ENCODE measurements at regions of chr20 and their contacts with region 1.

Region 1: DNA sequence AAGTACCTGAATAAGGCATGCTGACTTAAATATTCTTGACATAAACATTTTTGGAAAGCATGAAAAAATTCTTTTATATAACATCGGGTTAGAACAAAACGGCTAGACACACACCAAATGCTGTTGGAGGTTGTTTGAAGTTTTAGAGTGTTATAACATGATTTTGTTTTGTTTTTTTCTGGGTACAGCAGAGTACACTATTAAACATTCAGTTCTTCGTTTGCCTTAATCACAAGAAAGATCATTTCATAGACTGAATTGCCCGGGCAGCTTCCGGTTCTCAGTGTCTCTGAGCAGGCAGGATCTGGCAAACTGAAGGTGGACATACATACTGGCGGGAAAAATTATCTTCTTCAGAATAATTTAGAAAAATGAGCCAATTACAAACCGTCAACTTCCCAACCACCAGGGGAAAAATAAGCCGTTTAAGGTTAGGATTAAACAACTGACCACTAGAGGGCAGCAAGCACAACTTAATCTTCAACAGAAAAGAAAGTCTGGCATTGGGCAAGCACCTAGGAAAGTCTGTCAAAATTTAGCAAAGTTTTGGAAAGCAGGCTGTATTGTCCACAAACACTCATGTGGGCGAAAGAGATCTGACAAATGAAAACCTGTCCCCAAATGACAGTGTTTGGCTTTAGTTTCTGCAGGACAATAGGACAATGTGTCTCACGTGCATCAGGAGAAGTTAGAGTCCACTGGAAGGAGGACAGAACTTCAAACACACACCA is 15.0 kb downstream of the ZNF217 start:
- DNase-seq: peak; percentile 92
- H3K4me3 Mint-ChIP-seq: peak overlapping the region; percentile 82
- H3K27ac Mint-ChIP-seq: peak overlapping the region; percentile 82
- H3K4me1 Mint-ChIP-seq: peaks cover 75% of the 10 kb centered on the region
- H3K27me3 Mint-ChIP-seq: no peaks in the 10 kb centered on the region

Region 2: GRCh38 chr20:53077373-53078205 is 501.1 kb before region 1 on chr20:
- intact Hi-C with region 1: loop called (anchors 10 kb)
- DNase-seq: peak; percentile 68
- H3K4me3 Mint-ChIP-seq: no peak overlapping the region
- H3K27ac Mint-ChIP-seq: no peak overlapping the region
- H3K4me1 Mint-ChIP-seq: peaks cover 37% of the 10 kb centered on the region
- H3K27me3 Mint-ChIP-seq: no peaks in the 10 kb centered on the region

Region 3: GRCh38 chr20:53387983-53388675 is 190.5 kb before region 1 on chr20:
- intact Hi-C with region 1: no loop called
- DNase-seq: peak; percentile 76
- H3K4me3 Mint-ChIP-seq: peak overlapping the region; percentile 51
- H3K27ac Mint-ChIP-seq: peak overlapping the region; percentile 73
- H3K4me1 Mint-ChIP-seq: peaks cover 18% of the 10 kb centered on the region
- H3K27me3 Mint-ChIP-seq: no peaks in the 10 kb centered on the region

Region 4: GRCh38 chr20:53613748-53614147 is 35.1 kb after region 1 on chr20:
- intact Hi-C with region 1: no loop called
- DNase-seq: no peak
- H3K4me3 Mint-ChIP-seq: no peak overlapping the region
- H3K27ac Mint-ChIP-seq: no peak overlapping the region
- H3K4me1 Mint-ChIP-seq: peaks cover 16% of the 10 kb centered on the region
- H3K27me3 Mint-ChIP-seq: no peaks in the 10 kb centered on the region

Region 5: GRCh38 chr20:53643031-53643832 is 64.6 kb after region 1 on chr20:
- intact Hi-C with region 1: loop called (anchors 2 kb)
- DNase-seq: peak; percentile 91
- H3K4me3 Mint-ChIP-seq: peak overlapping the region; percentile 81
- H3K27ac Mint-ChIP-seq: peak overlapping the region; percentile 98
- H3K4me1 Mint-ChIP-seq: peaks cover 37% of the 10 kb centered on the region
- H3K27me3 Mint-ChIP-seq: no peaks in the 10 kb centered on the region

Region 6: GRCh38 chr20:53660078-53660909 is 81.6 kb after region 1 on chr20:
- intact Hi-C with region 1: loop called (anchors 2 kb)
- DNase-seq: peak; percentile 82
- H3K4me3 Mint-ChIP-seq: peak overlapping the region; percentile 84
- H3K27ac Mint-ChIP-seq: peak overlapping the region; percentile 93
- H3K4me1 Mint-ChIP-seq: peaks cover 54% of the 10 kb centered on the region
- H3K27me3 Mint-ChIP-seq: no peaks in the 10 kb centered on the region

Region 7: DNA sequence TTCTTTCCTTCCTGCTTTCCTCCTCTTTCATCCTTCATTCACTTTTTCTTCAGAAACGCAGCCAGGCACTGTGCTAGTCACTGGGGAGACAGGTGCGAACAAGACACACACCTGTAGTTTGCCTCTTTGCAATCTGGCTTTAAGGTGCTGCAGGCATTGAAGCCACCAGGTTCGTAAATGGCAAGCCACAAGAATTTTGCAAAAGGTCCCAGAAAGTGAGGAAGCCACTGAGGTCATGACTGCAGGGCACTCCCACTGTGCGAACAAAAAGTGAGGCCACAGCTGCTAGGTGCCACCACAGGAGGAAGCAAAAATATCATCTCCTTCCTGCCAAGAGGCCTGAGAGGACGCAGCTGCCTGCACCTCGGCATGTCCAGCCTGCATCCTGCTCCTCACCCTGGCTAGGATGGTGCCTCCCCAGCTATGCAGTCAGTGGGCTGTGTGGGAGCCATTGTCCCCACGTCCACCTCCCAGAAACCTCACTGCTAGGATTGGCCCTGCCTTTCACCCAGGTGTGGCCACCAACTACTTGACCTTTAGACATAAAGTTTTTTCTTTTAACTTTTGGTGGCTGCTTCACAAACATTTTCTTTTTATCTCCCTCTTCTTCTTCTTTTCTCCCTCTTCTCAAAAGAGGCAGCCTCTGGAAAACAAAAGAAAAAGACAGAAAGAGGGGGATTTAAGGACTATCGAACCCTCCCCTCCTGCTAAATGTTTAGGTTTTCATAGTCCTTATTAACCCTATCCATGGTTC is 260.9 kb after region 1 on chr20:
- intact Hi-C with region 1: loop called (anchors 2 kb)
- DNase-seq: peak; percentile 88
- H3K4me3 Mint-ChIP-seq: peak overlapping the region; percentile 85
- H3K27ac Mint-ChIP-seq: peak overlapping the region; percentile 98
- H3K4me1 Mint-ChIP-seq: peaks cover 58% of the 10 kb centered on the region
- H3K27me3 Mint-ChIP-seq: no peaks in the 10 kb centered on the region

Region 8: GRCh38 chr20:53899351-53900167 is 320.9 kb after region 1 on chr20:
- intact Hi-C with region 1: loop called (anchors 1 kb)
- DNase-seq: peak; percentile 92
- H3K4me3 Mint-ChIP-seq: peak overlapping the region; percentile 53
- H3K27ac Mint-ChIP-seq: peak overlapping the region; percentile 95
- H3K4me1 Mint-ChIP-seq: peaks cover 53% of the 10 kb centered on the region
- H3K27me3 Mint-ChIP-seq: no peaks in the 10 kb centered on the region

Region 9: GRCh38 chr20:53939572-53940359 is 361.1 kb after region 1 on chr20:
- intact Hi-C with region 1: loop called (anchors 1 kb)
- DNase-seq: peak; percentile 91
- H3K4me3 Mint-ChIP-seq: no peak overlapping the region
- H3K27ac Mint-ChIP-seq: peak overlapping the region; percentile 8
- H3K4me1 Mint-ChIP-seq: peaks cover 45% of the 10 kb centered on the region
- H3K27me3 Mint-ChIP-seq: no peaks in the 10 kb centered on the region